ENCODE measurements at regions of chr12 and their contacts with region 1.

Region 1: DNA sequence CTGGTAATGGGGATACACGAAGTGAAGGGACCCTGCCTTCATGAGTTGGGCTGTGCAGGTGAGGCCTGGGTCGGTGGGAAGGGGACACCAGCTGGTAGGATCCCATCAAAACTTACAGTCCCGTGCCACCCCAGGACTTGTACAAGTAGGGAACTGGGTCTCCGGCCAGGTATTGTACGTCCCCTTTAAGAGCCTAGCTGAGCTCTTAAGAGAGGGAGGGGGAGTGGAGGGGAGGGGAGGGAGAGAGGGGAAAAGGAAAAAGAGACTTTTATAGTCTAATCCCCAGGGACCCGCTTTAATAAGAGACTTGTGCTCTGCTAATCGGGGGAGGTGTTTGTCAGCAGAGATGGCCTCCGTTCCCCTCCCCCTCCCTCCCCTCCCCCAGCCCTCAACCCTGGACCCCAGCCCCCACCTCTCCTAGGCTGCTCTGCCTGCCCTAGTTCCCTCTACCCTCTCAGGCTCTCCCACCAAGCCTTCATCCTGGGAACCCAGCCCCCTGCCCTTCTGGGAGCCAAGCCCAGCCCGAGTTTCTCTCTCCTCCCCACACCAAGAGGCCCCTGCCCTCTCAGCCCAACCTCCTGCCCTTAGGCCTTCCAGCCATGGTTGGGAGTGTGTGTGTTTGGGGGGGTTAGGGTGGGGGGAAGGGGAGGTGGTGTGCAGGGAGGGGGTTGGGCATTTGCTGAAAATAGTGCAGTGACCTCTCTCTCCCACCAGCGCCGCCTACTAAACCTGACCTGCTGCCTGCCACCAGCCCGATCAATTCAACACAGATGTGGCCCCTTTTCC is 2.6 kb downstream of the GDF11 start:
- DNase-seq: peak in 1 of 2 experiments; percentile 77
- H3K4me3 ChIP-seq: peak overlapping the region; percentile 80 to 99 (median 92)
- H3K27ac ChIP-seq: peak overlapping the region; percentile 48; the same call in 1 of the 2 replicates
- H3K4me1 ChIP-seq: peaks cover 8 to 37% (median 23%) of the 10 kb centered on the region in 4 experiments
- H3K27me3 ChIP-seq: no peaks in the 10 kb centered on the region
- CTCF ChIP-seq: no peak
- EP300 ChIP-seq: peak in 1 of 2 experiments; percentile 23; a peak in 1 of 3 replicates
- POLR2A ChIP-seq: peak in 1 of 2 experiments; percentile 19; a peak in 1 of 3 replicates
- RAD21 ChIP-seq: no peak

Region 2: GRCh38 chr12:55696796-55697462 is 48.6 kb before region 1 on chr12:
- CTCF ChIA-PET with region 1: no interaction called
- POLR2A ChIA-PET with region 1: no interaction called
- DNase-seq: no peak
- H3K4me3 ChIP-seq: no peak overlapping the region
- H3K27ac ChIP-seq: no peak overlapping the region
- H3K4me1 ChIP-seq: no peaks in the 10 kb centered on the region
- H3K27me3 ChIP-seq: no peaks in the 10 kb centered on the region
- CTCF ChIP-seq: no peak
- EP300 ChIP-seq: no peak
- POLR2A ChIP-seq: no peak
- RAD21 ChIP-seq: no peak

Region 3: GRCh38 chr12:55757701-55758100 is 12.1 kb after region 1 on chr12:
- CTCF ChIA-PET with region 1: interaction called, 186 read pairs
- POLR2A ChIA-PET with region 1: interaction called, 809 read pairs
- DNase-seq: no peak
- H3K4me3 ChIP-seq: no peak overlapping the region
- H3K27ac ChIP-seq: no peak overlapping the region
- H3K4me1 ChIP-seq: no peaks in the 10 kb centered on the region
- H3K27me3 ChIP-seq: no peaks in the 10 kb centered on the region
- CTCF ChIP-seq: no peak
- EP300 ChIP-seq: no peak
- POLR2A ChIP-seq: peak in 1 of 2 experiments; percentile 50; a peak in 1 of 3 replicates
- RAD21 ChIP-seq: no peak

Region 4: GRCh38 chr12:55771736-55772135 is 26.2 kb after region 1 on chr12:
- CTCF ChIA-PET with region 1: interaction called, 10 read pairs
- POLR2A ChIA-PET with region 1: interaction called, 809 read pairs
- DNase-seq: no peak
- H3K4me3 ChIP-seq: no peak overlapping the region
- H3K27ac ChIP-seq: no peak overlapping the region
- H3K4me1 ChIP-seq: no peaks in the 10 kb centered on the region
- H3K27me3 ChIP-seq: no peaks in the 10 kb centered on the region
- CTCF ChIP-seq: no peak
- EP300 ChIP-seq: no peak
- POLR2A ChIP-seq: no peak
- RAD21 ChIP-seq: no peak